Activated CD4-positive, alpha-beta T cell treated with anti-CD3 and anti-CD28 coated beads for 36 hours (primary cell): ENCODE measurements at regions of chr3 and their contacts with region 1.

Region 1: DNA sequence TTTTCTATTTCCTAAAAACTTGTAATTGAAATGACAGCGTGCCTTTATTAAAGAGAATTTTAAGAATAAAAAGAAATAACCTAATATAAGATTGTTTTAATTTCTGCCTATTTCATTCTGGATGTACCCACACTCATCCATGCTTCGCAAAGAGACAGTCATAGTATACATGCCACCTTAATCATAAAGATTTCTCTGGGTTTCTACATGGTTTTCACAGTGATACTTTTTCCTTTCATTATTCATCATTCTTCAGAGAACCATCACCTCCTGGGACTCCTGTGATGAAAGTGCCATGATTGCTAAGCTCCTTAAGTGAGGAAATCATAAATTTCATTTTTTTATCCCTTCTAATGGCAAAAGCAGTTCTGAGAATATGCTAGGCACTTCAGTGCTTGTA is 4.3 kb upstream of the CCR8 start:
- DNase-seq: no peak
- ATAC-seq: peak; percentile 78
- H3K4me3 Mint-ChIP-seq: no peak overlapping the region
- H3K27ac Mint-ChIP-seq: no peak overlapping the region
- H3K4me1 Mint-ChIP-seq: peaks cover 60% of the 10 kb centered on the region
- H3K27me3 Mint-ChIP-seq: peaks cover 3% of the 10 kb centered on the region

Region 2: DNA sequence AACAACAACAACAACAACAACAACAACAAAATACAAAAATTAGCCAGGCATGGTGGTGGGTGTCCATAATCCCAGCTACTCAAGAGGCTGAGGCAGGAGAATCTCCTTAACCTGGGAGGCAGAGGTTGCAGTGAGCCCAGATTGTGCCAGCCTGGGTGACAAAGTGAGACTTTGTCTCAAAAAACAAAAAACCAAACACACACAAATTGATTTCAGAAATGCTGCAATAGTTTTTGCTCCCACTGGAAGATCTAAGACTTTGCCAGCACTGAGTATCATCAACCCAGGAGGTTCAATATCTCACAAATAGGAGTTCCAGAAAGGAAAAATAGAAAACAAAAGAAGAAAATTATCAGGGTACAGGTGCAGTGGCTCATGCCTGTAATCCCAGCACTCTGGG is 11.9 kb before region 1 on chr3:
- CTCF ChIA-PET with region 1: no interaction called
- POLR2A ChIA-PET with region 1: no interaction called
- intact Hi-C with region 1: no loop called
- DNase-seq: no peak
- ATAC-seq: no peak
- H3K4me3 Mint-ChIP-seq: no peak overlapping the region
- H3K27ac Mint-ChIP-seq: no peak overlapping the region
- H3K4me1 Mint-ChIP-seq: peaks cover 12% of the 10 kb centered on the region
- H3K27me3 Mint-ChIP-seq: no peaks in the 10 kb centered on the region

Region 3: DNA sequence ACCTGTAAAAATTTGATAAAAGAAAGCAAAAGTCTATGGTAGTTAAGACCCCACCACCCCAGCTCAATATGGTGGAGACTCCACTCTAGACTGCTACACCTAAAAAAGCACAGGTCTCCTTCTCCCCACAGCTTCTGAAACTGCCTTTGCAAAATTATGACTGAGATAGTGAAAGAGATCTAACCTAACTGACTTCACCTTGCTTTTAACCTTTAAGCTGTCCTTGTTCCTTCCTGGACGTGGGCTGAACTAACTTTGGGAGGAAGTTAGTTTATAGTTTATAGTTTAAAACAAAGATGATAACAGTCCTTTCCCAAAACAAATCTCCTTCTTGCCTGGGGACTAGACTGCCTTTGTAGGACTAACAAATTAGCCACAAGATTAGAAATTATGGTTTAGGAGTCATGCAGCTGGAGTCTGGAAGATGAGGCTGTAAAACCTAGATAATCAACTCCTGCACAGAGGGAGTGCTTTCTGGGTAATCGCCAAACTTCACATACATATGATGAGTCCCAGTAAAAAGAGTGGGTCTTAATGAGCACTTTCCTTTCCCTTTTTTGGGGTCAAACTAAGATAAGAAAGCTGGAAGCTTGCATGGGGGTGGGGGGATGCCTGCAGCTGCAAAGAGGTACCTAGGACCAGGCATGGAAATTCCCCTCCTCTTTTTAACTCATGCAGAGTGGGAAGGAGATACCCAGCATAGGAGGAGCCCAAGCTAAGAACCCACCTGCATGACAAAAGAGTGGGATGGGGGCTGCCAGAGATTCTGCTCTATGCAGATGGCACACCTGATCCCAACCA is 21.7 kb after region 1 on chr3:
- CTCF ChIA-PET with region 1: interaction called, 4 read pairs
- POLR2A ChIA-PET with region 1: no interaction called
- intact Hi-C with region 1: loop called in 1 of 2 experiments (anchors 2 kb)
- DNase-seq: no peak
- ATAC-seq: peak; percentile 91
- H3K4me3 Mint-ChIP-seq: no peak overlapping the region
- H3K27ac Mint-ChIP-seq: peak overlapping the region; percentile 32
- H3K4me1 Mint-ChIP-seq: peaks cover 33% of the 10 kb centered on the region
- H3K27me3 Mint-ChIP-seq: no peaks in the 10 kb centered on the region